ENCODE measurements at regions of chr15 and their contacts with region 1.

Region 1: DNA sequence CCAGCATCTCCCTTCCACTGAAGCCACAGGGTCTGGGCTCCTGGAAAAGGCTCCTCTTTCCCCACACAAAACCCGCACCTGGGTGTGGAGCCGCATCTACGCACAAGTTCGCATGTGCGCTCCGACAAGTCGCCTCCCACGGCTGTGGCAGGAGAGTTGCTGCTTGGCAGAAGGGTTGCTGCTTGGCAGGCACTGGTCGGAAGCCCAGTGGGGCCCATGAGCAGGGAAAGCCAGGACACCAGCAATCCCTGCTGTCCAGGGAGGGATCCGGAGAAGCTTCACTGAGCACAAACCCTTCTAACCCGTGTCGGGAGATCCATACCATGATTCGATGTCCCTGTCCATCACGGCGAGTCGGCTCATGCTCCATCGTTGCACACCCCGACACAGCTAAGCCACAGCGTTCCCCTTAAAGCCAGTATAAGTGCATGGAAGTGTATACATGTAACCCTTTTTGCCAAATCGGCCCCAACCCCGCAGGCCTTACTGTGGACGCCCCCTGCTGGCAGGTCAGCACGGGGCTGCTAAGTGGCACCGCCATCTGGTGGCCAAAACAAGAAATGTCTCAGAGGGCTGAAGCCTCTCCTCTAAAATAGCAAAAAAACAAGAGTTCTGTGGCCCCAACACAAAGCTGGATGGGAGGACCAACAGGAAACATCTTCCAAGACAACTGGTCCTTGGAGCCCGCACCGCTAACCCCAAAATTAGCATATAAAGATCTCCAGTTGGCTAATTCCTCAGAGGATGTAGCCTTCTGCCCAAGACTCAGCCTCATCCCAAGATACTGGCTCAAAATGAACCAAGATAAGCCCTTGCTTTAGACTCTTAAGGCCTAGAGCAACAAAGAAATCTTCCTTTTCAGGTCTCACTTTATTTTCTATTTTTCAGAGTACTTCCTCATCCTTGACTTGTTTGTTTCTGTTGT is 8.3 kb downstream of the ANKRD63 start:
- DNase-seq: peak; percentile 86
- ATAC-seq: peak; percentile 82
- H3K4me3 Mint-ChIP-seq: no peak overlapping the region
- H3K27ac Mint-ChIP-seq: no peak overlapping the region
- H3K4me1 Mint-ChIP-seq: peaks cover 25% of the 10 kb centered on the region
- H3K27me3 Mint-ChIP-seq: peaks cover 2% of the 10 kb centered on the region
- CTCF ChIP-seq: peak; percentile 97

Region 2: GRCh38 chr15:39887832-39888231 is 386.8 kb before region 1 on chr15:
- CTCF ChIA-PET with region 1: interaction called, 6 read pairs
- POLR2A ChIA-PET with region 1: no interaction called
- intact Hi-C with region 1: loop called (anchors 1 kb)
- DNase-seq: no peak
- ATAC-seq: no peak
- H3K4me3 Mint-ChIP-seq: no peak overlapping the region
- H3K27ac Mint-ChIP-seq: no peak overlapping the region
- H3K4me1 Mint-ChIP-seq: no peaks in the 10 kb centered on the region
- H3K27me3 Mint-ChIP-seq: peaks cover 6% of the 10 kb centered on the region
- CTCF ChIP-seq: no peak

Region 3: DNA sequence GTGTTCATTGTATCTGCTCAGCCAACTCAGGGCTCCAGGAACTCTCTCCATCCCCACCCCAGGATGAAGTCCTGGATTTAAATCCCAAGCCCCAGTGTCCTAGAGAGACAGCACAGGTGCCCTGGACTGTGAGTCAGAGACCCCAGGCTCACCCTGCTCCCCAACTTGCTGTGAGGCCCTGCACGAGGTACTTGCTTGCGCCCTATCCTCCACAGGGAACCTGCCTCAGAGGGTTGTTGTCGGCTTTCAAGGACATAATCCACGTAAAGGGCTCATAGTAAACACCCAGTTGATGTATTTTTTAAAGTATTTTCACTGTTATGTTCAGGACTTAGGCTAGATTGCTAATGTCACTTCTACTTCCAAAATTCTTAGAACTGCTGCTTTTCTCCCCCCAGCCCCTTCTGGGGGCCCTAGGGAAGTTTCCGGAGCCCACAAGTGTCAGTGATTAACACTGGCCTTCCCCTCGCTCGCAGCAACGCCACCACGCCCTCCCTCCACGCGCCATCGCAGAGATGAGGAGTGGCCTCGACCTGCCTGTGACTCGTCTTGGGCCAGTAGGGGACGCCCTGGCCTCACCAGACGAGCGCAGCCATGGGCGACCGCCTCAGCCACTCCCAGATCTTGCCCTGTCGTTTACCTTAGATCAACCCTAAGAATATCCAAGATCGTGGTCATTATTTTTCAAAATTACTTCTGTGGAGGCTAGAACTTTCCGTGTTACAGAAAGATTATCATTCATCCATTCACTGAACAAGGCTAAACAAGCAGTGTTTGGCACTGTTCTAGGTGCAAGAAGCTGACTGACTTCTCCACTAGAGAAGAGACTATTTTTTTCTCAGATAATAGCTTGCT is 229.7 kb before region 1 on chr15:
- CTCF ChIA-PET with region 1: interaction called, 112 read pairs
- POLR2A ChIA-PET with region 1: interaction called, 11 read pairs
- intact Hi-C with region 1: loop called (anchors 1 kb)
- DNase-seq: peak; percentile 77
- ATAC-seq: peak; percentile 87
- H3K4me3 Mint-ChIP-seq: peak overlapping the region; percentile 46
- H3K27ac Mint-ChIP-seq: peak overlapping the region; percentile 93
- H3K4me1 Mint-ChIP-seq: peaks cover 64% of the 10 kb centered on the region
- H3K27me3 Mint-ChIP-seq: no peaks in the 10 kb centered on the region
- CTCF ChIP-seq: peak; percentile 58

Region 4: GRCh38 chr15:40238532-40239403 is 35.8 kb before region 1 on chr15 and contains the start of gene PAK6:
- CTCF ChIA-PET with region 1: interaction called, 10 read pairs
- POLR2A ChIA-PET with region 1: interaction called, 3 read pairs
- intact Hi-C with region 1: loop called (anchors 5 kb)
- DNase-seq: peak; percentile 36
- ATAC-seq: peak; percentile 48
- H3K4me3 Mint-ChIP-seq: peak within 1 kb of the TSS; percentile 72
- H3K27ac Mint-ChIP-seq: no peak within 1 kb of the TSS
- H3K4me1 Mint-ChIP-seq: peaks cover 37% of the 10 kb centered on the region
- H3K27me3 Mint-ChIP-seq: peaks cover 12% of the 10 kb centered on the region
- CTCF ChIP-seq: no peak
- total RNA-seq, gene PAK6: 0.34 and 0.40 TPM in 2 replicates

Region 5: DNA sequence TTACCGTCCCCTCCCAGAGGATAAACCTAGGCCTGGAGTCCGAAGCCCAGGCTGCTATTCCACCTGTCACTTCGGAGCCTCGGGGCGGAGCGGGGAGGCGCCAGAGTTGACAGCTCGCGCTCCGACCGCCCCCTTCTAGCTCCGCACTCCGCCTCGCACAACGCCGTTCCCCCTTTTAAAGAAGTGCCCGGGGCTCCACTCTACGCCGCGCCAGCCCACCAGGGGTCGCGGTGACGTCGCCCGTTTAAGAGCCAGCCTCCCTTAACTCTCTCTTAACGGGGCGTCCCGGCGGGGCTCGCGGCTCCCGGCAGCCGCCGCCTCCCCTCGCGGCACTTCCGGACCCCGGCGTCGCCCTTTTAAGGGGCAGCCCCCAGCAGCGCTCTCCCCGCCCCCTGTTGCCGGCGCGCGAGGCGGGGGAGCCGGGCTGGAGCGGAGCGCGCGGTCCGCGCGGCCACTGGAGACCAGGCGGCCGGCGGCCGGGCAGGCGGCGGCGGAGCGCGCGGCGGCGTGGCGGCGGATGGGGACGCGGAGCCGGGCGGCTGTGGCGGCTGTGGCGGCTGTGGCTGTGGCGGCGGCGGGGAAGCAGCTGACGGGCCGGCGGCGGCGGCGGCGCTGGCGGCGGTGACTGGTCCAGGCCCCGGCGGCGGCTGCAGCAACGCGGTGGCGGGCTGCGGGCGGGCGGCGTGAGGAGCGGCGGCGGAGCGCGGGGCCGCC is 48.8 kb after region 1 on chr15 and contains the start of gene INAFM2:
- CTCF ChIA-PET with region 1: interaction called, 36 read pairs
- POLR2A ChIA-PET with region 1: interaction called, 4 read pairs
- intact Hi-C with region 1: loop called (anchors 1 kb)
- DNase-seq: peak; percentile 88
- ATAC-seq: peak; percentile 92
- H3K4me3 Mint-ChIP-seq: peak within 1 kb of the TSS; percentile 80
- H3K27ac Mint-ChIP-seq: peak within 1 kb of the TSS; percentile 65
- H3K4me1 Mint-ChIP-seq: peaks cover 29% of the 10 kb centered on the region
- H3K27me3 Mint-ChIP-seq: no peaks in the 10 kb centered on the region
- CTCF ChIP-seq: no peak
- total RNA-seq, gene INAFM2: 9.5 TPM in 2 replicates

Region 6: GRCh38 chr15:40409400-40409831 is 134.8 kb after region 1 on chr15:
- CTCF ChIA-PET with region 1: no interaction called
- POLR2A ChIA-PET with region 1: no interaction called
- intact Hi-C with region 1: no loop called
- DNase-seq: no peak
- ATAC-seq: no peak
- H3K4me3 Mint-ChIP-seq: no peak overlapping the region
- H3K27ac Mint-ChIP-seq: no peak overlapping the region
- H3K4me1 Mint-ChIP-seq: peaks cover 34% of the 10 kb centered on the region
- H3K27me3 Mint-ChIP-seq: no peaks in the 10 kb centered on the region
- CTCF ChIP-seq: no peak

Region 7: DNA sequence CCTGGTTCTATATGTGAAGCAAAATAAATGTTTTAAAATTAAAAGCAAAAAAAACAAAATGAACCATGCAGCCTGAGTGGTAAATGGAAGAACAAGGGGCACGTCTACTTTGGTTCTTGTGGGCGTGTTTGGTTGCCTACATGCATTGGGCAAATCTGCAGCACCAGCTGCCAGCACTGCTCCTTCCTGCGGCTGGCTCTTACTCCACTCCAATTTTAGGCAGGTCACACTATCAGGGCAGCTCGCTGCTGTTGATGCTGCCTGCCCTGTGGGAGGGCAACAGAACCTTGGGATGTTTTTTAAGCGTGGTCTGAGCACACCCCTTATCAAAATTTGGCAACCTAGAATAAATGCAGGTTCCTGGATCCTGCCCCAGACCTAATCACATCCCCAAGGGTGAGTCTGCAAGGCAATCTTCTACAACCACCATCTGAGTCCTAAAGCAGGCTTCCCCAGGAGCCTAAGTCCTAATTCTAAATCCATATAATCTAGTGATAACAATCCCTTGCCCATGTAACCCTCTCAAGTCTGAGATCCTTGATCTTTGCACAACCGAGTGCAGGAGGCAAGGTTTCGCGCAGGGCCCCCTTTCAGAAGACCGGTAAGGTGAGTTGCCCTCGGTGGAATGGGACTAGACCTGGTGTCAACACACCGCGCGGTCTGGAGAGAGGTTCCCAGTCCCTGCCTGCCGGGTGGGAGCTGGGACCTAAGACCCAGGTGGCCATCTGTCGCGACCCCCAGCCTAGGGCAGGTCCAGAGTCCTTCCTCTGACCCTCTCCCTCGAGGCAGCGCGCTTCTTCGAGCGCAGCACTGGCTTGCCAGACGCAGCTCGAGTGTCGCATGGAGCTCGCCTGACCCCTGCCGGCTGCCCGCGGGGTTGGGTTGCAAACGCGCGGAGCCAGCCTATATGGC is 146.9 kb after region 1 on chr15:
- CTCF ChIA-PET with region 1: interaction called, 25 read pairs
- POLR2A ChIA-PET with region 1: interaction called, 4 read pairs
- intact Hi-C with region 1: loop called (anchors 1 kb)
- DNase-seq: peak; percentile 77
- ATAC-seq: peak; percentile 97
- H3K4me3 Mint-ChIP-seq: no peak overlapping the region
- H3K27ac Mint-ChIP-seq: no peak overlapping the region
- H3K4me1 Mint-ChIP-seq: peaks cover 2% of the 10 kb centered on the region
- H3K27me3 Mint-ChIP-seq: no peaks in the 10 kb centered on the region
- CTCF ChIP-seq: peak; percentile 86

Region 8: GRCh38 chr15:40469776-40470399 is 195.3 kb after region 1 on chr15:
- CTCF ChIA-PET with region 1: no interaction called
- POLR2A ChIA-PET with region 1: no interaction called
- intact Hi-C with region 1: no loop called
- DNase-seq: no peak
- ATAC-seq: no peak
- H3K4me3 Mint-ChIP-seq: peak overlapping the region; percentile 64
- H3K27ac Mint-ChIP-seq: peak overlapping the region; percentile 77
- H3K4me1 Mint-ChIP-seq: peaks cover 10% of the 10 kb centered on the region
- H3K27me3 Mint-ChIP-seq: no peaks in the 10 kb centered on the region
- CTCF ChIP-seq: no peak

Region 9: DNA sequence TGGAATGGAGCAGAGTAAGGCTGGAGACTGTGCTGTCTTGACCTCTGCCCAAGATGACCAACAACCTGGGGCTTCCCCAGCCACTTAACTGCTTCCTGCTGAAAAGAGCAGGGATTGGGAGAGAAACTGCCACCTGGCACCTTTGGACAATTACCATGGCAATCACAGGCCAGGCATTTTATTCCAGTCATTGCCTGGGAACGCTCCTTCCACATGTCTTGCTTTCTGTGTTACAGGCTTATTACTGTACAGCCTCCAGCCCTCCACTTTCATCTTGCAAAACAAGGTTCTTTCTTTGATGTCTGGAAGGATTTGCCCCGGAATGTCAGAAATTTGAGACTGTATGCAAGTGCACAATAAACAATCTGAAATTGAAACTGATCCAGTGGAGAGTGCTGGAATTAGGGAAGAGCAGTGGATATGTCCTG is 551.1 kb after region 1 on chr15:
- CTCF ChIA-PET with region 1: no interaction called
- POLR2A ChIA-PET with region 1: no interaction called
- intact Hi-C with region 1: no loop called
- DNase-seq: no peak
- ATAC-seq: no peak
- H3K4me3 Mint-ChIP-seq: no peak overlapping the region
- H3K27ac Mint-ChIP-seq: no peak overlapping the region
- H3K4me1 Mint-ChIP-seq: no peaks in the 10 kb centered on the region
- H3K27me3 Mint-ChIP-seq: no peaks in the 10 kb centered on the region
- CTCF ChIP-seq: no peak

Region 10: GRCh38 chr15:41512940-41513510 is 1238.4 kb after region 1 on chr15:
- CTCF ChIA-PET with region 1: no interaction called
- POLR2A ChIA-PET with region 1: no interaction called
- intact Hi-C with region 1: no loop called
- DNase-seq: peak; percentile 52
- ATAC-seq: peak; percentile 79
- H3K4me3 Mint-ChIP-seq: peak overlapping the region; percentile 85
- H3K27ac Mint-ChIP-seq: peak overlapping the region; percentile 41
- H3K4me1 Mint-ChIP-seq: peaks cover 24% of the 10 kb centered on the region
- H3K27me3 Mint-ChIP-seq: peaks cover 5% of the 10 kb centered on the region
- CTCF ChIP-seq: no peak